ENCODE measurements at regions of chr4 and their contacts with region 1.

Region 1: DNA sequence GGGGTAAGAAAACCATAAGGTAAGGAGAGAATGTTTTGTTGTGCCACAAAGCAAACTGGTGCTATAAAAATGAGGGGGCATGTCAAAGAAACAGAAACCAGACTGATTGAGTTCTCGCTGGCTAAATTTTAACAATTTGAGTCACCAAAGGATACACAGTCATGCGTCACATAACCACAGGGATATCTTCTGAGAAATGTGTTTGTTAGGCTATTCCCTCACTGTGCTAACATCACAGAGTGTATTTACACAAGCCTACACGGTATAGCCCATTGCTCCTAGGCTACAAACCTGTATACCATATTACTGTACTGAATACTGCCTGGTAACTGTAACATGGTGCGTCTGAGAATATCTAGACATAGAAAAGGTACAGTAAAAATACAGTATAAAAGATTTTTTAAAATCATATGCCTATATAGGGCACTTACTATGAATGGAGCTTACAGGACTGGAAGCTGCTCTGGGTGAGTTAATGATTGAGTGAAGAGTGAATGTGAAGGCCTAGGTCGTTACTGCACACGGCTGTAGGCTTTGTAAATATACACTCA is 50.1 kb downstream of the FBXW7 start:
- DNase-seq: peak; percentile 49
- H3K4me3 Mint-ChIP-seq: no peak overlapping the region
- H3K27ac Mint-ChIP-seq: no peak overlapping the region
- H3K4me1 Mint-ChIP-seq: peaks cover 40% of the 10 kb centered on the region
- H3K27me3 Mint-ChIP-seq: no peaks in the 10 kb centered on the region

Region 2: DNA sequence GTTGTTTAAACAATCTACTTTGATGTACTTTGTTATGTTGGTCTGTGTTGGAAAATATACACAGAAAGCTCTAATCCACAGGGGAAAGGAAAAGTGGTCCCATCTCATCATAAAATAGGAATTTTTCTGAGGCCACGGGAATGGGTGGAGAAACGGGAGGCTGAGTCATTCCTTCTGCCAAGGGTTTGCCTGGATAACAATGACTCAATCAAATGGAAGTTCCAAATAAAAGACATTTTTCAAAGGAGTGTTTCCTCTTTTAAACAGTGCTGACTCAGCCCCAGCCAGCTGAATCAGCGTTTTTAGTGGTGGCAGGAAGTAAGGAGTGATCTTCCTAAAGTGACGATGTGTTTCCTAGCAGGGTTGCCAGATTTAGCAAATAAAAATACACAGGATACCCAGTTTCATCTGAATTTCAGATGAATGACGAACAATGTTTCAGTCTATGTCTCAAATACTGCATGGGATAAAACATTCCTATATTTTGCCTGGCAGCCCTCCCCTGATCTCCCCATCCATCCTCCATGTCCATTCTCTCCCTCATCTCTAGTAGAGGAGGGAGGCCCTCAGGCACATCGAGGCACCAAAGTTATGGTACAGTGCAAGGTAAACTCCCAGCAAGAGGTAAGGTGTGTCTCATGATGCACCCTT is 379.6 kb before region 1 on chr4:
- CTCF ChIA-PET with region 1: no interaction called
- intact Hi-C with region 1: loop called (anchors 10 kb)
- DNase-seq: peak; percentile 61
- H3K4me3 Mint-ChIP-seq: no peak overlapping the region
- H3K27ac Mint-ChIP-seq: no peak overlapping the region
- H3K4me1 Mint-ChIP-seq: peaks cover 84% of the 10 kb centered on the region
- H3K27me3 Mint-ChIP-seq: no peaks in the 10 kb centered on the region

Region 3: GRCh38 chr4:152408514-152409327 is 77.1 kb before region 1 on chr4:
- CTCF ChIA-PET with region 1: interaction called, 4 read pairs
- intact Hi-C with region 1: loop called (anchors 5 kb)
- DNase-seq: peak; percentile 35
- H3K4me3 Mint-ChIP-seq: no peak overlapping the region
- H3K27ac Mint-ChIP-seq: no peak overlapping the region
- H3K4me1 Mint-ChIP-seq: peaks cover 7% of the 10 kb centered on the region
- H3K27me3 Mint-ChIP-seq: no peaks in the 10 kb centered on the region

Region 4: GRCh38 chr4:152464030-152464823 is 21.6 kb before region 1 on chr4:
- CTCF ChIA-PET with region 1: interaction called, 4 read pairs
- intact Hi-C with region 1: loop called (anchors 1 kb)
- DNase-seq: no peak
- H3K4me3 Mint-ChIP-seq: peak overlapping the region; percentile 35
- H3K27ac Mint-ChIP-seq: peak overlapping the region; percentile 72
- H3K4me1 Mint-ChIP-seq: peaks cover 48% of the 10 kb centered on the region
- H3K27me3 Mint-ChIP-seq: no peaks in the 10 kb centered on the region

Region 5: DNA sequence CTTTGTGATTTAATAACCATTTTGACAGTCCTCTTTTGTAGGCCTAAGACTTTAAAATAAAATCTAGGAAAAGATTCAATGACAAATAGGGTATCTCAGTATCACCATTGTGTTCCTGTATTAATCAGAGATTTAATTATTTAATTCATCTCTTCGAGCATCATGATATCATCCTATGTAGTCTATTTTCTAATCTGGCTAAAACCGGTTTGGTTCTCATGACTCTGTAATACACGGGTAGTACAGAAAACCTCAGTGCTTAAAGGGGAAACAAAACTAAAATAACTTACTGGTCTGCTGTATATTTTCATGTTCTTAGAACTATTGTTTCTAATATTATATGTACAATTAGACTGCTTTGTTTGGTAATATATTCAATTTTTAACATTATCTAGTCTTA is 73.8 kb after region 1 on chr4:
- CTCF ChIA-PET with region 1: no interaction called
- intact Hi-C with region 1: loop called (anchors 1 kb)
- DNase-seq: no peak
- H3K4me3 Mint-ChIP-seq: no peak overlapping the region
- H3K27ac Mint-ChIP-seq: no peak overlapping the region
- H3K4me1 Mint-ChIP-seq: peaks cover 15% of the 10 kb centered on the region
- H3K27me3 Mint-ChIP-seq: no peaks in the 10 kb centered on the region